PC-3 (cell line): ENCODE measurements at regions of chr18 and their contacts with region 1.

Region 1: DNA sequence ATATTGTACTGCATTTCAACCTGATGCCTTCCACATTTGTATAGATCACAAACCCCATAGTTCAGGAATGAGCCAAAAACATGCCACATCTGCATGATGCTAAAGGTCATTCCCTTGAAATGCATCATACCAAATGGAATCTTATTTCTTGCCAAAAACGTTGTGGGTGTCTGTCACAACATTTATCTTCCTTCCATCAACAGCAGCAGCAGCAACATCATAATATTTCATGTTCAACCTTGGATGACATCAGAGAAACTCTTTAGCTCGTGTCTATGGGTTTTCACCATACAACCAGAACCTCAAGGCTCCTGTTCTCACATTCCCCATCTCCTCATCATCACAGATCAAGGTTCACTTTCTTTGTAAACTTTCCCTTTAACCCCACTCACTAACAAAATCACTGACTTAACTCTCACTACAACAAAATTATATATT is 221.3 kb upstream of the CTAGE1 start:
- DNase-seq: peak; percentile 76
- ATAC-seq: peak; percentile 14; the same call in 1 of the 2 replicates
- H3K4me3 ChIP-seq: no peak overlapping the region
- H3K27ac ChIP-seq: no peak overlapping the region
- H3K4me1 ChIP-seq: peaks cover 31% of the 10 kb centered on the region
- H3K27me3 ChIP-seq: no peaks in the 10 kb centered on the region
- CTCF ChIP-seq: no peak

Region 2: DNA sequence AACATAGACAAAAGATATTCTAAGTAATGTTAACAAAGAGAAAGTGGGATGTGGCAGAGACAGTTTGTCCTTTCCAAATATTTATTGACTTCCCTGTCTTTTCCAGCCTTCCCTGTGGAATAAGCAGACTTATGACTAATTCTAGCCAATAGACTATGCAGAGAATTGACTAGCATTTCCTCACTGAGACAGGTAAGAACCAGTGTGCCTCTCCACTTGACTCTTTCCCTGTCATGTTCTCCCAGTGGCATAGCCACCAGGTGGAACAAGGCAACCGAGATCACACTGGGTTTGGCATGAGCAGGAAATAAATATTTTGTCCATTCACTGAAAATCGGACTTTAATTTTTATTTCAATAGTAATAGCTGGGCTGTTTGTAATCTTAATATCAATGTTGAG is 53.2 kb before region 1 on chr18:
- CTCF ChIA-PET with region 1: no interaction called
- POLR2A ChIA-PET with region 1: no interaction called
- intact Hi-C with region 1: loop called (anchors 10 kb)
- DNase-seq: no peak
- ATAC-seq: no peak
- H3K4me3 ChIP-seq: no peak overlapping the region
- H3K27ac ChIP-seq: no peak overlapping the region
- H3K4me1 ChIP-seq: no peaks in the 10 kb centered on the region
- H3K27me3 ChIP-seq: no peaks in the 10 kb centered on the region
- CTCF ChIP-seq: no peak

Region 3: DNA sequence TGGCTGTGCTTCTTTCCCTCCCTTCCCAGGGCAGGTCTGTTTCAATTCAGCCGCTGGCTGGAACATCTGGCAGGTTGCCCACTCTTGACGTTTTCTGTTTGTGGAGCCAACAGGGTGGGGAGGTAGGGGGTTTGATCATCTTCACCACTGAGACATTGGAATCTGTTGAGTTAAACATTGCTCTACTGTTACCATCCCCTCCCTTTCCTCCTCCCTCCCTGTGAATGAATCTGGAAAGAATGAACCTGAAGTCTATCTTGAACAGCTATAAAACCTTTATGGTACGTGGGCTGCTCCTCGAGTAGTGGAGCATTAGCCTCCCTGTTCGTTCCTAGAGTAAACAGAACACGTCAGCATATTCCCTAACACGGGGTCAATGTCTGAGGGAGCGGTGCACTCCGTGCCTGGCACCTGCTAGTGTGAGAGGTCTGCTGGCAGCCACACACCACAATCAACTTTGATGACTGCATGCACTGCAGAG is 44.2 kb after region 1 on chr18:
- CTCF ChIA-PET with region 1: no interaction called
- POLR2A ChIA-PET with region 1: no interaction called
- intact Hi-C with region 1: loop called (anchors 5 kb)
- DNase-seq: peak; percentile 96
- ATAC-seq: peak; percentile 96
- H3K4me3 ChIP-seq: peak overlapping the region; percentile 19; the same call in 1 of the 2 replicates
- H3K27ac ChIP-seq: peak overlapping the region; percentile 76
- H3K4me1 ChIP-seq: peaks cover 27% of the 10 kb centered on the region
- H3K27me3 ChIP-seq: no peaks in the 10 kb centered on the region
- CTCF ChIP-seq: no peak

Region 4: DNA sequence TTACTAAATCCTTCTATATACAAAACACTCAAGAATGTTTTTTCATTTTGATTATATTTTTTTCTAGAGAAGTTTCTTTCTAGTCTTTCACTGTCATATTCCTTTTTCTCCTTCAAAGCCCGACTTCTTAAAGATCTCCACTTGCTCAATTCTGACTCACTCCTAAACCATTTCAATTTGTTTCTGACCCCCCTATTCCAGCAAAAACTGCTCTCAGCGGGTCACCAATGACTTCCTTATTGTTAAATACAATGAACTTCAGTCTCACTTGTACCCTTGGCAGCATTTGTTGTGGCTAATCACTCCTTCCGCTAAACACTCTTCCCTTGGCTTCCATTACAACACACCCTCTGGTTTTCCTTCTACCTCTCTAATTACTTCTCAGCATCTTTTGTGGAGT is 183.0 kb after region 1 on chr18:
- CTCF ChIA-PET with region 1: no interaction called
- POLR2A ChIA-PET with region 1: no interaction called
- intact Hi-C with region 1: no loop called
- DNase-seq: peak; percentile 56
- ATAC-seq: peak; percentile 23; the same call in 1 of the 2 replicates
- H3K4me3 ChIP-seq: no peak overlapping the region; the same call in 1 of the 2 replicates
- H3K27ac ChIP-seq: no peak overlapping the region
- H3K4me1 ChIP-seq: peaks cover 31% of the 10 kb centered on the region
- H3K27me3 ChIP-seq: no peaks in the 10 kb centered on the region
- CTCF ChIP-seq: no peak